GM13976 (cell line): ENCODE measurements at regions of chr12 and their contacts with region 1.

Region 1: GRCh38 chr12:69388371-69388770 is 28.8 kb downstream of the YEATS4 start:
- DNase-seq: peak; percentile 16
- CTCF ChIP-seq: no peak

Region 2: DNA sequence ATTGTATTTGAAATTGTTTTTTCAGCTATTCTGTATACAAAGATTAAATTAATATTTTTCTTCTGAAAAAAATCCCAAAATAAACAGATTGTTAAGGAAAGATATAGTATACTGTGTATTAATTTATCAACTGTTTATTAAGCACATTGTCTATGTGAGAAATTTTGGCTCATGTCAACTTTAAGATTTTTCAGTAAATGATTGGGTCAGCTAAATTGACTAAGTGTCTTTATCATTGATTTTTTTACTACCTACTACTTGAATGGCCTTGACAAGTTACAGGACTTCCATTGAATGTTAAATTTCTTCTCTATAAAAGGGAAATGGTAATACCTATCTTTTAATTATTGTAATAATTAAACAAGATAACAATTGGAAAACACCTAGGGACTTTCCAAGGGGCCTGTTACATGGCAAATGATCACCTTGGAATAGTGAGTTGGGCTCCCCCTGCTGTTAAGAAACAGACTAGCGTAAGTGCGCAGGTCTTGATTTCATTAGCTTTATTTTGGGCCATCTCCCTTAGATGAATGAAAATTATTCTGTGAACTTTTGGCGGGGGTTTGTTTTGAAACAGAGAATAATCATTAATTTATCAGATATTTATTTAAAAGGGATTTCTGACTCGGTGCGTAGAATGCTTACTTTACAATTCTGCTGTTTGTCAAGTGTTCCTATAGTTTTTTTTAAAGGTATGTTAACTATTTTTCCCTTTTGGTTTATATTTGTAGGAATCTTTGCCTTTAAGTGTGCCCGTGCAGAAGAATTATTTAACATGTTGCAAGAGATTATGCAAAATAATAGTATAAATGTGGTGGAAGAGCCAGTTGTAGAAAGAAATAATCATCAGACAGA is 182.4 kb after region 1 on chr12:
- in situ Hi-C with region 1: loop called (anchors 25 kb)
- DNase-seq: peak; percentile 49
- CTCF ChIP-seq: peak; percentile 58